ENCODE measurements at regions of chr10 and their contacts with region 1.

Region 1: GRCh38 chr10:124741281-124741921 is 2.8 kb downstream of the FAM53B start:
- DNase-seq: no peak
- ATAC-seq: peak; percentile 77
- H3K4me3 ChIP-seq: peak overlapping the region; percentile 84
- H3K27ac ChIP-seq: peak overlapping the region; percentile 57
- H3K4me1 ChIP-seq: peaks cover 48% of the 10 kb centered on the region
- H3K27me3 ChIP-seq: no peaks in the 10 kb centered on the region
- CTCF ChIP-seq: peak; percentile 81 to 91 (median 88); a peak in 5 of 6 replicates
- EP300 ChIP-seq: no peak
- POLR2A ChIP-seq: no peak
- RAD21 ChIP-seq: peak; percentile 86

Region 2: GRCh38 chr10:124539935-124540641 is 201.3 kb before region 1 on chr10:
- CTCF ChIA-PET with region 1: interaction called, 149 read pairs
- POLR2A ChIA-PET with region 1: interaction called, 3 read pairs
- RAD21 ChIA-PET with region 1: interaction called, 67 read pairs
- SMC1A ChIA-PET with region 1: interaction called, 67 read pairs
- in situ Hi-C with region 1: loop called (anchors 5 kb)
- intact Hi-C with region 1: loop called (anchors 1 kb)
- DNase-seq: no peak
- ATAC-seq: peak; percentile 94
- H3K4me3 ChIP-seq: no peak overlapping the region
- H3K27ac ChIP-seq: no peak overlapping the region
- H3K4me1 ChIP-seq: peaks cover 3% of the 10 kb centered on the region; the same call in 1 of the 2 replicates
- H3K27me3 ChIP-seq: no peaks in the 10 kb centered on the region; a peak in 1 of 4 replicates
- CTCF ChIP-seq: peak; percentile 65 to 92 (median 83)
- EP300 ChIP-seq: no peak
- POLR2A ChIP-seq: no peak
- RAD21 ChIP-seq: peak; percentile 94

Region 3: GRCh38 chr10:124619195-124619594 is 122.2 kb before region 1 on chr10:
- CTCF ChIA-PET with region 1: interaction called, 44 read pairs
- POLR2A ChIA-PET with region 1: interaction called, 3 read pairs
- RAD21 ChIA-PET with region 1: interaction called, 35 read pairs
- SMC1A ChIA-PET with region 1: interaction called, 13 read pairs
- in situ Hi-C with region 1: no loop called
- intact Hi-C with region 1: loop called (anchors 5 kb)
- DNase-seq: no peak
- ATAC-seq: peak; percentile 68
- H3K4me3 ChIP-seq: peak overlapping the region; percentile 49; the same call in 1 of the 2 replicates
- H3K27ac ChIP-seq: peak overlapping the region; percentile 25
- H3K4me1 ChIP-seq: peaks cover 44% of the 10 kb centered on the region
- H3K27me3 ChIP-seq: no peaks in the 10 kb centered on the region
- CTCF ChIP-seq: no peak
- EP300 ChIP-seq: no peak
- POLR2A ChIP-seq: no peak
- RAD21 ChIP-seq: no peak

Region 4: GRCh38 chr10:124647421-124648130 is 93.8 kb before region 1 on chr10:
- CTCF ChIA-PET with region 1: interaction called, 73 read pairs
- POLR2A ChIA-PET with region 1: interaction called, 3 read pairs
- RAD21 ChIA-PET with region 1: interaction called, 61 read pairs
- SMC1A ChIA-PET with region 1: interaction called, 81 read pairs
- in situ Hi-C with region 1: no loop called
- intact Hi-C with region 1: loop called (anchors 5 kb)
- DNase-seq: peak; percentile 50
- ATAC-seq: peak; percentile 79
- H3K4me3 ChIP-seq: no peak overlapping the region
- H3K27ac ChIP-seq: peak overlapping the region; percentile 87
- H3K4me1 ChIP-seq: peaks cover 49% of the 10 kb centered on the region
- H3K27me3 ChIP-seq: no peaks in the 10 kb centered on the region
- CTCF ChIP-seq: peak; percentile 37 to 41 (median 40); a peak in 5 of 6 replicates
- EP300 ChIP-seq: no peak; a peak in 1 of 4 replicates
- POLR2A ChIP-seq: no peak
- RAD21 ChIP-seq: peak; percentile 43

Region 5: DNA sequence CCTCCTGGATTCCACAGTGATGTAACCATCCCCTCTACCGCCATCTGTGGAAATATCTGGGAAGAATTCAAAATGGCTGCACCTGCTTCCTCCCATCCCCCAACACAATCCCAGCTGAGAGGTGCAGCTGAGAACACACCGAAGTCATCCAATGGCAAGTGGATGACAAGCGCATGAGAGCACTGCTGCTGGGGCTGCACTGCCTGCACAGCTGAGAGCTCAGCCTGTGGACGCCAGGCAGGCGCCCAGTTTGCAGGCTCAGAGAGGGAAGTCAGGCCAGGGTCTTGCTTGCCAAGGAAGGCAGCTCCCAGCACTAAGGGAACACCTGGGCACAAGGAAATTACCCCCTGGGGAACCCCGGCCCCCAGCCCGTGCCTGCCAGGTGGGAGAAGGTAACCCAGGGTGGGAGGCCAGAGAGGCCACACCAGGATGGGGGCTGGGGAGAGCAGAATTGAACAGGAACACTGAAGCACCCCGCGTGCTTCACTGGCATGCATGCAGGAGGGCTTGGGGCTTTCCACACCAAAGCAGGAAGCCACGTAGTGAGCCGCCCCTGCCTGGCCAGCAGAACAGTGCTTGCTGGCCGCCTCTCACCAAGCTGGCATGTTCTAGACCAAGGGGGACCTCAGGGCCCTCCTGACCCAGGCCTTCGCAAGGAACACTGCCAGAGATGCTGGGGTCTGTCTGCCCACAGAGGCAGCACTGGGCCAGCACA is 43.4 kb before region 1 on chr10:
- CTCF ChIA-PET with region 1: interaction called, 106 read pairs
- POLR2A ChIA-PET with region 1: interaction called, 14 read pairs
- RAD21 ChIA-PET with region 1: interaction called, 86 read pairs
- SMC1A ChIA-PET with region 1: interaction called, 56 read pairs
- in situ Hi-C with region 1: no loop called
- intact Hi-C with region 1: loop called (anchors 2 kb)
- DNase-seq: no peak
- ATAC-seq: peak; percentile 69
- H3K4me3 ChIP-seq: no peak overlapping the region
- H3K27ac ChIP-seq: peak overlapping the region; percentile 94
- H3K4me1 ChIP-seq: peaks cover 77% of the 10 kb centered on the region
- H3K27me3 ChIP-seq: no peaks in the 10 kb centered on the region
- CTCF ChIP-seq: no peak
- EP300 ChIP-seq: 0 out of 4 replicates have a peak, but pooled peaks of 1 of the 2 experiments have one; percentile 41
- POLR2A ChIP-seq: no peak
- RAD21 ChIP-seq: no peak

Region 6: GRCh38 chr10:124791378-124792348 is 50.3 kb after region 1 on chr10 and contains the start of gene EEF1AKMT2:
- CTCF ChIA-PET with region 1: interaction called, 6 read pairs
- POLR2A ChIA-PET with region 1: no interaction called
- RAD21 ChIA-PET with region 1: interaction called, 12 read pairs
- SMC1A ChIA-PET with region 1: no interaction called
- in situ Hi-C with region 1: no loop called
- intact Hi-C with region 1: no loop called
- DNase-seq: peak; percentile 48
- ATAC-seq: peak; percentile 93
- H3K4me3 ChIP-seq: peak within 1 kb of the TSS; percentile 99
- H3K27ac ChIP-seq: peak within 1 kb of the TSS; percentile 88
- H3K4me1 ChIP-seq: no peaks in the 10 kb centered on the region
- H3K27me3 ChIP-seq: no peaks in the 10 kb centered on the region
- CTCF ChIP-seq: 0 out of 6 replicates have a peak, but pooled peaks of 1 of the 3 experiments have one; percentile 10
- EP300 ChIP-seq: no peak
- POLR2A ChIP-seq: peak; percentile 99
- RAD21 ChIP-seq: no peak
- polyA plus RNA-seq, gene EEF1AKMT2: 9.1 to 12.9 TPM

Region 7: DNA sequence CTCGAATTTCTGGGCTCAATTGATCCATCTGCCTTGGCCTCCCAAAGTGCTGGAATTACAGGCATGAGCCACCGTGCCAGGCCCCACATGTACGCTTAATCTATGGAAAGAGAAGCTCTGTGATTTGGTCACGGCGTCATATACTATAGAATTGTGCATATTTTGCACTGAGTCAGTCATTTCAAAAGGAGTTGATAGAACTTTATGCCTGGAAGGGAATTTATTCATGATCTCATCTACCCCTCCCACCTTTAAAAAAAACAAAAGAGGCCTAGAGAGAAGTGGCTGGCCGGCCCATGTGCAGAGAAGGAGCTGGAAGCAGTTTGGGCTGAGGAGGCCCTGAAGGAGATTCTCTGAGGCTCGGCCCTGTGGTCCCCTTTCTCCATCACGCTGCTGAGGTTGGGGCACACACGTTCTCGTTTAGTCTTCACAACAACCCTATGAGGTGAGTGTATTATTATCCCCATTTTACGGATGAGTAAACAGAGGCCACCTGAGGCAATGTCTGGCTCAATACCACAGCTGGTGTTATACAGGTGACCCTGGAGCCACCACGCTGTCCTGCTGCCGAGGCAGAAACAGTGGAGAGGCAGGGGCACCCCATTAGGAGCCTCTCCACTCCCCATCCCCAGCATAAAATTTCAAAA is 153.3 kb after region 1 on chr10:
- CTCF ChIA-PET with region 1: no interaction called
- POLR2A ChIA-PET with region 1: no interaction called
- RAD21 ChIA-PET with region 1: no interaction called
- SMC1A ChIA-PET with region 1: no interaction called
- in situ Hi-C with region 1: no loop called
- intact Hi-C with region 1: no loop called
- DNase-seq: no peak
- ATAC-seq: no peak
- H3K4me3 ChIP-seq: no peak overlapping the region
- H3K27ac ChIP-seq: no peak overlapping the region
- H3K4me1 ChIP-seq: no peaks in the 10 kb centered on the region
- H3K27me3 ChIP-seq: peaks cover 0 to 2% of the 10 kb centered on the region in 2 experiments; a peak in 2 of 4 replicates
- CTCF ChIP-seq: no peak
- EP300 ChIP-seq: no peak
- POLR2A ChIP-seq: no peak
- RAD21 ChIP-seq: no peak